Colonic mucosa (tissue), 4 donors: ENCODE measurements at regions of chr19 and their contacts with region 1.

Region 1: DNA sequence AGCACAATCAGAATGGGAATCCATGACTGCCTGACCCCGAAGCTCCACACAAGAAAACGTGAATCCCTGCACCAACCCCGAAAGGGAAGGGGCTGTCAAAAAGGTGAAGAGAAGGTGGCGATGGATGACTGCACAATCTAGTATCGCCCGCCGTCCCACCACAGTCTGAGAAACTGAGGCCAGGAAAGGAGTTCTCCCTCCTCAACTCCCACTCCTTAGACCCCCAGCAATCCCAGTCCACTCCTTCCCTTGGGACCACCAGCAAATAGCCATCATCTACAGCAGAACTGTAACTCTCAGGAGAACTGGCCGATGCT is 451 bp downstream of the NOSIP start:
- DNase-seq: peak; percentile 29
- H3K4me3 ChIP-seq: peak overlapping the region; percentile 71
- H3K27ac ChIP-seq: peak overlapping the region; percentile 81
- H3K4me1 ChIP-seq: peaks cover 12% of the 10 kb centered on the region
- H3K27me3 ChIP-seq: no peaks in the 10 kb centered on the region
- CTCF ChIP-seq: no peak

Region 2: GRCh38 chr19:49640113-49640898 is 60.4 kb after region 1 on chr19 and contains the start of gene RRAS:
- intact Hi-C with region 1: no loop called
- DNase-seq: peak; percentile 100
- H3K4me3 ChIP-seq: peak within 1 kb of the TSS; percentile 54
- H3K27ac ChIP-seq: peak within 1 kb of the TSS; percentile 99
- H3K4me1 ChIP-seq: peaks cover 6% of the 10 kb centered on the region
- H3K27me3 ChIP-seq: no peaks in the 10 kb centered on the region
- CTCF ChIP-seq: no peak
- total RNA-seq, gene RRAS: 45.7 to 62.2 TPM

Region 3: GRCh38 chr19:49672131-49672919 is 92.4 kb after region 1 on chr19:
- intact Hi-C with region 1: loop called (anchors 5 kb)
- DNase-seq: peak; percentile 84
- H3K4me3 ChIP-seq: no peak overlapping the region
- H3K27ac ChIP-seq: peak overlapping the region; percentile 24
- H3K4me1 ChIP-seq: no peaks in the 10 kb centered on the region
- H3K27me3 ChIP-seq: no peaks in the 10 kb centered on the region
- CTCF ChIP-seq: peak; percentile 86